Esophagus muscularis mucosa (tissue), 4 donors: ENCODE measurements at regions of chr1 and their contacts with region 1.

Region 1: GRCh38 chr1:236064674-236065508 is at the start of gene NID1:
- DNase-seq: peak; percentile 96
- H3K4me3 ChIP-seq: peak within 1 kb of the TSS; percentile 63 to 90 (median 79)
- H3K27ac ChIP-seq: peak within 1 kb of the TSS; percentile 89 to 99 (median 96)
- H3K4me1 ChIP-seq: peaks cover 30 to 71% (median 64%) of the 10 kb centered on the region in 4 donors
- H3K27me3 ChIP-seq: peaks cover 0 to 4% (median 0%) of the 10 kb centered on the region in 4 donors
- CTCF ChIP-seq: peak; percentile 39 to 44 (median 43)
- EP300 ChIP-seq: peak; percentile 62
- POLR2A ChIP-seq: peak; percentile 69
- total RNA-seq, gene NID1: 187 to 390 (median 287) TPM

Region 2: DNA sequence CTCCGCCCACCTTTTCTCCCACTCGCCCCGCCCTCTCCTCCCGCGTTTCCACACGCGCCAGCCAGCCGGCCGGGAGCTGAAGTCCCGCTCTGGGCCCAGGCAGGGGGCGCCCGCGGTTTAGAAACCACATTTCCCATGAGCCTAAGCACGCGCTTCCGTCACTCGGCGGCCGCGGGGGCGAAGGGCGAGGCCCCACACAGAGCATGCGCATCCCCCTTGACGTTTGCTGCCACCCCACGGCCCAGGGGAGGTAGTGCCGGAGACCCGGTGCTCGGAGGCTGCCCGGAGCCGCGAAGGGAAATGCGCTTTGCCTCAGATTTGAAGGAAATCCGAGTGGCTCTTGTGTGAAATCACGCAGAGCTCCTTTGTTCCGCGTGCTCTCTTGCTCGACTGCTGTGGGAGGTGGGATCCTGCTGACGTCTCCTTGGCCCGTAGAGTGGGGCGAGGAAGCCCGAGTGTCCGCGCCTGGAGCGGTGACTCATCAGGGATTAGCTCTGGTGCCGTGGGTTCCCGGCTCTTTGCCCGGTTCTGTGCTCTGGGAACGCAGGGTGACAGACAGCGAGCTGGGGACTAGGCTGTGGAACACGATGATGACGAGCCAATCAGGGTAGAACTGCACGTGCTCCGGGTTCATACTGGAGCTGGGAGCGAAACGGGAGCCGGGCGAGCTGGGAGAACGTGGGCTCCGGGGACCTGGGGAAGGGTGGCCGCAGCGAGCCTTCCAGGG is 560.2 kb before region 1 on chr1:
- intact Hi-C with region 1: loop called (anchors 10 kb)
- DNase-seq: peak; percentile 100
- H3K4me3 ChIP-seq: peak overlapping the region; percentile 80 to 96 (median 92)
- H3K27ac ChIP-seq: peak overlapping the region; percentile 96 to 98 (median 98)
- H3K4me1 ChIP-seq: peaks cover 21 to 43% (median 38%) of the 10 kb centered on the region in 4 donors
- H3K27me3 ChIP-seq: no peaks in the 10 kb centered on the region
- CTCF ChIP-seq: peak; percentile 72 to 92 (median 91)
- EP300 ChIP-seq: peak; percentile 85
- POLR2A ChIP-seq: peak; percentile 70

Region 3: GRCh38 chr1:235697508-235697907 is 367.4 kb before region 1 on chr1:
- intact Hi-C with region 1: no loop called
- DNase-seq: no peak
- H3K4me3 ChIP-seq: no peak overlapping the region
- H3K27ac ChIP-seq: no peak overlapping the region
- H3K4me1 ChIP-seq: no peaks in the 10 kb centered on the region
- H3K27me3 ChIP-seq: no peaks in the 10 kb centered on the region
- CTCF ChIP-seq: no peak
- EP300 ChIP-seq: no peak
- POLR2A ChIP-seq: no peak

Region 4: GRCh38 chr1:236018885-236019453 is 45.9 kb before region 1 on chr1:
- intact Hi-C with region 1: loop called (anchors 5 kb)
- DNase-seq: peak; percentile 95
- H3K4me3 ChIP-seq: no peak overlapping the region
- H3K27ac ChIP-seq: peak overlapping the region; percentile 75 to 86 (median 79)
- H3K4me1 ChIP-seq: peaks cover 45 to 76% (median 72%) of the 10 kb centered on the region in 4 donors
- H3K27me3 ChIP-seq: no peaks in the 10 kb centered on the region
- CTCF ChIP-seq: no peak
- EP300 ChIP-seq: peak; percentile 61
- POLR2A ChIP-seq: no peak

Region 5: DNA sequence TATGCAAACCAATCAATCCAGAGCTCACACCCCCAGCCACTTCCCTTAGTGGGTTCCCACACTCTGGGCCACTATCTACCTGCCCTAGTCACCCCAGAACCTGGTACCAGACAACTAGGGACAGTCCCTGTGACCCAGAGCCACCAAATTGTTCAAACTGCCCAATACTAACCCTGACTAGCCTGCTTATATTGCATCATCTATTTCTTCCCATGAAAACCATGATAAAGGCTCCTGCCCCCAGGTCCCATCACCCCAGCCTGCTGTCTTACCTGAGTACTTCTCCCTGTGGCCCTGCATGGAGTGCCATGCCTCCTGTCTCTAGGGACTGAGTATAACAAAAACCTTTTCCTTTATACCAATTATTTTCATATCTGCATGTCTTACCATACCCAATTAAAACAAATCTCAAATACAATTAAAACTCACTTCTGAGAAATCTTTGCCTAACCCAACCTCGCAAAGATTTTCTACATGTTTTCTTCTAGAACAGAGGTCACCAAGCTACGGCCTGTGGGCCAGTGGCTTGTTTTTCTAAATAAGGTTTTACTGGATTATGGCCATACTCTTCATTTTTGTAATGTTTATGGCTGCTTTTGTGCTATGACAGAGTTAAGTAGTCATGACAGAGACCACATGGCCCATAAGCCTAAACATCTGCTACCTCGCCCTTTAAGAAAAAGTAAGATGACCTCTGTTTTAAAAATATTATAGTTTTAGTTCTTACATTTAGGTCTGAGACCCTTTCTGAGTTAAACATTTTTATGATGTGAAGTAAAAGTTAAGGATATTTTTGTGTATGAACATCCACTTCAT is 31.0 kb after region 1 on chr1:
- intact Hi-C with region 1: loop called (anchors 2 kb)
- DNase-seq: no peak
- H3K4me3 ChIP-seq: no peak overlapping the region
- H3K27ac ChIP-seq: peak overlapping the region in 1 of 4 donors; percentile 14
- H3K4me1 ChIP-seq: peaks cover 0 to 10% (median 0%) of the 10 kb centered on the region in 4 donors
- H3K27me3 ChIP-seq: no peaks in the 10 kb centered on the region
- CTCF ChIP-seq: no peak
- EP300 ChIP-seq: no peak
- POLR2A ChIP-seq: no peak